H1 (cell line): ENCODE measurements at regions of chr6 and their contacts with region 1.

Region 1: GRCh38 chr6:31729515-31729978 is 448 bp upstream of the DDAH2 start:
- DNase-seq: peak; percentile 87 to 96
- H3K4me3 ChIP-seq: peak overlapping the region; percentile 56 to 91 (median 83)
- H3K27ac ChIP-seq: peak overlapping the region; percentile 49; the same call in 1 of the 2 replicates
- H3K4me1 ChIP-seq: peaks cover 8 to 19% (median 11%) of the 10 kb centered on the region in 4 experiments
- H3K27me3 ChIP-seq: no peaks in the 10 kb centered on the region
- CTCF ChIP-seq: peak in 2 of 3 experiments; percentile 86 to 87; a peak in 3 of 4 replicates
- EP300 ChIP-seq: no peak
- POLR2A ChIP-seq: no peak
- RAD21 ChIP-seq: peak; percentile 83 to 90

Region 2: GRCh38 chr6:31652925-31653718 is 76.4 kb before region 1 on chr6:
- CTCF ChIA-PET with region 1: interaction called, 3 read pairs
- POLR2A ChIA-PET with region 1: interaction called, 11 read pairs
- DNase-seq: peak in 1 of 2 experiments; percentile 76
- H3K4me3 ChIP-seq: peak overlapping the region; percentile 82 to 94 (median 92)
- H3K27ac ChIP-seq: peak overlapping the region; percentile 99
- H3K4me1 ChIP-seq: peaks cover 0 to 5% (median under 1%) of the 10 kb centered on the region in 4 experiments; a peak in 2 of 7 replicates
- H3K27me3 ChIP-seq: no peaks in the 10 kb centered on the region
- CTCF ChIP-seq: peak in 1 of 3 experiments; percentile 18; a peak in 1 of 4 replicates
- EP300 ChIP-seq: no peak
- POLR2A ChIP-seq: peak in 1 of 2 experiments; percentile 79; a peak in 2 of 3 replicates
- RAD21 ChIP-seq: peak in 1 of 2 experiments; percentile 21; a peak in 2 of 4 replicates

Region 3: DNA sequence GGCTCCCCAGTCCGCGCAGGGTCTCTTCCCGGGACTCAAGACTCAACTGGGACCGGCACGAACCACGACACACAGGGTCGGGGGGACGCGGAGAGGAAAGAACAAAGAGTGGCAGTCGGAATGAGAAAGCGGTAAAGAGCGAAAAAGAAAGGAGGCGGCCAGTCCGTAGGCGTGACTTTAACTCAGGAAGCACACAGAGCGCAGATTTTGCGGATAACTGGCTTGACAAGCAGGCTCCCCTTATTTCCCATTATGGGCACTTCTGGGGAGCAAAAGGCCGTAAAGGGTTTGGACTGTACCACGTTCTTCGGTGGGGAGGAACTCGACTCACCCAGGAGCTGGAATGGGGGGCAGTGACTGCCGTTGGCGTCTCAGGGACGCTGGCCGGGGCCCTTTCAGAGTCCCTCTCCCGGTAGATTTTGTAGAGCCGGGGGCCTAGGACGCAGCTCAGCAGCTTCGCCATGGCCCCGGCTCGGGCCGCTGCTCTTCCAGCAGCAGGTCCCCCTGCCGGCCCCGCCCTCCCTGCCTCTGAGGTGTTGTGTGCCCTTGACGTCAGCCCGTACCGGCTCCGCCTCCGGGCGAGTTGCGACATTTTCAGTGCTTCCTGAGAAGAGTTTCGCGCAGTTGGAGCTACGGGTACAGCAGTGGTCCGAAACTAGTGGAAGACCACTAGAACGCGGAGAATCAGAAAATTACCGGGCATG is 26.6 kb before region 1 on chr6 and contains the start of gene ABHD16A:
- CTCF ChIA-PET with region 1: interaction called, 5 read pairs
- POLR2A ChIA-PET with region 1: interaction called, 17 read pairs
- DNase-seq: peak; percentile 95 to 96
- H3K4me3 ChIP-seq: peak within 1 kb of the TSS; percentile 69 to 94 (median 90)
- H3K27ac ChIP-seq: peak within 1 kb of the TSS; percentile 89; the same call in 1 of the 2 replicates
- H3K4me1 ChIP-seq: peaks cover 2 to 5% (median 3%) of the 10 kb centered on the region in 4 experiments; a peak in 4 of 7 replicates
- H3K27me3 ChIP-seq: no peaks in the 10 kb centered on the region
- CTCF ChIP-seq: no peak
- EP300 ChIP-seq: peak; percentile 23 to 88
- POLR2A ChIP-seq: peak in 1 of 2 experiments; percentile 85; a peak in 2 of 3 replicates
- RAD21 ChIP-seq: no peak
- total RNA-seq, gene ABHD16A: 29.3 and 32.9 TPM in 2 replicates

Region 4: GRCh38 chr6:31717499-31718222 is 11.9 kb before region 1 on chr6:
- CTCF ChIA-PET with region 1: interaction called, 39 read pairs
- POLR2A ChIA-PET with region 1: interaction called, 73 read pairs
- DNase-seq: no peak
- H3K4me3 ChIP-seq: 0 out of 8 replicates have a peak overlapping the region, but pooled peaks of 1 of the 4 experiments have one; percentile 9
- H3K27ac ChIP-seq: no peak overlapping the region
- H3K4me1 ChIP-seq: peaks cover 11 to 29% (median 27%) of the 10 kb centered on the region in 4 experiments
- H3K27me3 ChIP-seq: no peaks in the 10 kb centered on the region; a peak in 1 of 7 replicates
- CTCF ChIP-seq: peak; percentile 52 to 74 (median 72); a peak in 3 of 4 replicates
- EP300 ChIP-seq: no peak
- POLR2A ChIP-seq: no peak
- RAD21 ChIP-seq: peak; percentile 50 to 56; a peak in 3 of 4 replicates

Region 5: DNA sequence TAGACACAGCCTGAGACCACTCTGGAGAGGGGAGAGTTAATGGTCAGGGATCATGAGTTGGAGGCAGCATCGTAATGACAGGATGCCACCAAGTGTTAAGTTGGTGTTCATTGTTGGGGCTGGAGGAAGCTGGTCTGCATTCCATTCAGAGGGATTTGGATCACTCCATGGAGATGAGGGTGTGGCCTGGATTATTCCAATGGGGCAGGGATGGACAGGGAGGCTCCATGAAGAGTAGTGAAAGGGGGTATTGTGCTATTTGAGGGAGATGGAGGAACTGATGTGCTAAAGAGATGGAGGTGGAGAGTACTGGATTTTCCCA is 34.0 kb after region 1 on chr6:
- CTCF ChIA-PET with region 1: interaction called, 89 read pairs
- POLR2A ChIA-PET with region 1: interaction called, 10 read pairs
- DNase-seq: no peak
- H3K4me3 ChIP-seq: no peak overlapping the region
- H3K27ac ChIP-seq: 0 out of 2 replicates have a peak overlapping the region, but pooled peaks have one; percentile 32
- H3K4me1 ChIP-seq: peaks cover 0 to 11% (median under 1%) of the 10 kb centered on the region in 4 experiments; a peak in 4 of 7 replicates
- H3K27me3 ChIP-seq: no peaks in the 10 kb centered on the region
- CTCF ChIP-seq: no peak
- EP300 ChIP-seq: peak in 1 of 2 experiments; percentile 94; a peak in 2 of 3 replicates
- POLR2A ChIP-seq: no peak
- RAD21 ChIP-seq: peak in 1 of 2 experiments; percentile 9; a peak in 1 of 4 replicates

Region 6: DNA sequence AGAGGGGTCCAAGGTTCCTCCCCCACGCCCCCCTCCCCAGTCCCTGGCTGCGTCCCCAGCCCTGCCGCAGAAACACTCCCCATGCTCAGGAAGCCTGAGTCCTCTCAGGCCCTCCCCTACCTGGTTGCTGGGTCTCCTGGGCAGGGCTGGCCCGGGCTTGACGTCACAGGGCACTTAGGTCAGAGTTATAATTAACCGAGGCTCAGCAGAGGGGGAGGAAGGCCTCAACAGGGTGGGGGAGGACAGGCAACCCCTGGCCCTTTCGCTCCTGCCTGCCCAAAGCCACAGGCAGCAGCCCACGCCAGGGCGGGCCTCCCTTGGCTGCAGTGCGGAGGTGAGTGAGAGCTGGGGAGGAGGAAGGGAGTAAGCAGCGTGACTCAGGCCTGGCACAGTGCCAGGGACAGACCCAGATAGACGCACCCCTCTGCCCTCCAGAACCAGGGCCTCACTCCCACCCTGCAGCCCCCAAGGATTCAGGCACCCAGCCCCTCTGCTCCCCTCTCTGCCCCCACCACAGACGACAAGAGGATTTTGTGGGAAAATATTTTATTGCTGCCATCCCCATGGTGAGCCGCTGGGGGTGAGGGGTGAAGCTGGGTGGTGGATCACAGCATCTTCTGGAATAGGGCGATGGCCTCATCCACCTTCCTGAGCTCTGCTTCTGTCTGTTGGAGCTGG is 47.6 kb after region 1 on chr6 and contains the start of gene VWA7:
- CTCF ChIA-PET with region 1: interaction called, 89 read pairs
- POLR2A ChIA-PET with region 1: interaction called, 12 read pairs
- DNase-seq: peak in 1 of 2 experiments; percentile 63
- H3K4me3 ChIP-seq: no peak within 1 kb of the TSS
- H3K27ac ChIP-seq: peak within 1 kb of the TSS; percentile 26; the same call in 1 of the 2 replicates
- H3K4me1 ChIP-seq: peaks cover 0 to 7% (median 3%) of the 10 kb centered on the region in 4 experiments; a peak in 4 of 7 replicates
- H3K27me3 ChIP-seq: no peaks in the 10 kb centered on the region; a peak in 1 of 7 replicates
- CTCF ChIP-seq: no peak
- EP300 ChIP-seq: no peak
- POLR2A ChIP-seq: 0 out of 3 replicates have a peak, but pooled peaks of 1 of the 2 experiments have one; percentile 19
- RAD21 ChIP-seq: no peak
- total RNA-seq, gene VWA7: 1.5 and 2.1 TPM in 2 replicates

Region 7: DNA sequence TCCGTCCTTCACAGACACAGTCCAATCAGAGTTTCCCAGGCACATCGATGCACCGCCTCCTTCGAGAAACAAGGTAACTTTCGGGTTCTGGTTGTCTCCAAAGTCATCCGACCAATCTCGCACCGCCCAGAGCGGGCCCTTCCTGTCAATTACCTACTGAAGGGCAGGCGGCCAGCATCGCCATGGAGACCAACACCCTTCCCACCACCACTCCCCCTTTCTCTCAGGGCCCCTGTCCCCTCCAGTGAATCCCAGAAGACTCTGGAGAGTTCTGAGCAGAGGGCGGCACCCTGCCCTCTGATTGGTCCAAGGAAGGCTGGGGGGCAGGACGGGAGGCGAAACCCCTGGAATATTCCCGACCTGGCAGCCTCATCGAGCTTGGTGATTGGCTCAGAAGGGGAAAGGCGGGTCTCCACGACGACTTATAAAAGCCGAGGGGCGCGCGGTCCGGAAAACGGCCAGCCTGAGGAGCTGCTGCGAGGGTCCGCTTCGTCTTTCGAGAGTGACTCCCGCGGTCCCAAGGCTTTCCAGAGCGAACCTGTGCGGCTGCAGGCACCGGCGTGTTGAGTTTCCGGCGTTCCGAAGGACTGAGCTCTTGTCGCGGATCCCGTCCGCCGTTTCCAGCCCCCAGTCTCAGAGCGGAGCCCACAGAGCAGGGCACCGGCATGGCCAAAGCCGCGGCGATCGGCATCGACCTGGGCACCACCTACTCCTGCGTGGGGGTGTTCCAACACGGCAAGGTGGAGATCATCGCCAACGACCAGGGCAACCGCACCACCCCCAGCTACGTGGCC is 97.9 kb after region 1 on chr6 and contains the start of gene HSPA1B:
- CTCF ChIA-PET with region 1: interaction called, 11 read pairs
- POLR2A ChIA-PET with region 1: interaction called, 14 read pairs
- DNase-seq: peak; percentile 98
- H3K4me3 ChIP-seq: peak within 1 kb of the TSS; percentile 55 to 75 (median 72)
- H3K27ac ChIP-seq: peak within 1 kb of the TSS; percentile 77
- H3K4me1 ChIP-seq: peaks cover 5 to 12% (median 9%) of the 10 kb centered on the region in 4 experiments; a peak in 6 of 7 replicates
- H3K27me3 ChIP-seq: no peaks in the 10 kb centered on the region
- CTCF ChIP-seq: no peak
- EP300 ChIP-seq: no peak
- POLR2A ChIP-seq: peak; percentile 99 to 100
- RAD21 ChIP-seq: no peak
- total RNA-seq, gene HSPA1B: 76.6 and 89.3 TPM in 2 replicates